A673 (cell line): ENCODE measurements at regions of chr18 and their contacts with region 1.

Region 1: GRCh38 chr18:8406186-8406867 is 202.9 kb upstream of the RAB12 start:
- DNase-seq: no peak
- H3K4me3 ChIP-seq: no peak overlapping the region
- H3K27ac ChIP-seq: no peak overlapping the region
- H3K4me1 ChIP-seq: no peaks in the 10 kb centered on the region
- H3K27me3 ChIP-seq: peaks cover 4% of the 10 kb centered on the region
- CTCF ChIP-seq: no peak

Region 2: DNA sequence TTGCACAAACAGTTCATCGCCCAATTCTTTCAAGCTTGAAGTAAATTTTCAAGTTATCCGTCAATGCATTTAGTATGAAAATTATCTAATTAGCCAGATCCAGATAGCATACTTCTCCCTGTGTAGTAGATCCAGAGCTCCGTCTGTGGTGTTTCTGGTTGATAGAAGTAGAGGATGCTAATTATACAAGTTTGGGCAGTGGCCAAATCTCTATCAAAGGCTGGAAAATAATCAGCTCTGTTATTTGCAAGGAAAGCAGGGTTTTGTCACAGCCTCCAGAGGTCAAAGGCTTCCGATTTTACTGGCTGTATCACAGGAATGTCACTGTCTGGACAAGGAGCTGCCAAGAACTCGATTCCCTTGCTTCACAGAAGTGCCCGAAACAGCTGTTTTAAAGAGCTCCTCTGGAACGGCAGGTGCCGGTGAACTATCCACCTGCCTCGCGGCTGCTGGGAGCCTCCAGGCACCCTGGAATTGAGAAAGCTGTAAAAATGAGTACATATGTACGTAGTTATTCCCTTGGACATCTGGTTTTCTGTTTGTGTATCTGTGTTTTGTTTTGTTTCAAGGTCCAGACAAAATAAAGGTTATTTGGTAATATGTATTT is 1146.7 kb before region 1 on chr18:
- CTCF ChIA-PET with region 1: no interaction called
- POLR2A ChIA-PET with region 1: no interaction called
- intact Hi-C with region 1: no loop called
- DNase-seq: no peak
- H3K4me3 ChIP-seq: no peak overlapping the region
- H3K27ac ChIP-seq: no peak overlapping the region
- H3K4me1 ChIP-seq: no peaks in the 10 kb centered on the region
- H3K27me3 ChIP-seq: no peaks in the 10 kb centered on the region
- CTCF ChIP-seq: no peak

Region 3: DNA sequence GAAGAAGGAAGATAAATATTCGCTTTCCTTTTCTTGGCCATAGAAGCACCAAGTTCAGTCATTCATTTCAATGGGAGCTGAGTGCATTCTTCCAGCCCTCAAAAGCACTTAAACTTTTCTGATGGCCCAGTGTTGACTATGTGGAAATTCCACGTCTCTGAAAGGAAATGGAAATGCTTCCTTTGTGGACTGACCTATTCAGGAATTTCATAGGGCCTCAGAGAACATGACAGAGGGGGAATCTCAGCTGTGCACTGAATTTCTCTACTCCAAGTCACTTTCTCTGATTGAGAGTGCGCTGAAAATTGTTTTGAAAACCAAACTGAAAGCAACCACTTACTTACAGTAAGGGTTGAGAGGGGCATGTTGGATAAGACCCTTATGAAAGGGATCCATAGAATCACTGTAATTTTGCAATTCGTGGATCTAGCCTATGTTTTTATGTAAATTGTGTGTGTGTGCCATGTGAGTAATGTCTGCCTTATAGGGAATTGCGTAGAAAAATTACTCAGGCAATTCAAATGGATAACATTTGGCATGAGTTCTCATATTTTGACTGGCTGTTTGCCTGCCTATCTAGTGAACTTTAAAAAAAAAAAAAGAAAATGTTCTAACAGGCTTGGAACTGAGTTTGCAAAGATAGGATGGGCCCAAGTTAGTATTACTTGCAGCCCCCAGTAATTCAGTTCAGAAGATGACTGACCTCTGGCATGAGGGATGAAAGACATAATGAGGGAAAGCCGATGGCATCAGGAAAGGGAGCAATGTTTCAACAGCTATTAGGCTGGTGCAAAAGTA is 402.2 kb before region 1 on chr18:
- CTCF ChIA-PET with region 1: no interaction called
- POLR2A ChIA-PET with region 1: no interaction called
- intact Hi-C with region 1: no loop called
- DNase-seq: no peak
- H3K4me3 ChIP-seq: no peak overlapping the region
- H3K27ac ChIP-seq: no peak overlapping the region
- H3K4me1 ChIP-seq: no peaks in the 10 kb centered on the region
- H3K27me3 ChIP-seq: no peaks in the 10 kb centered on the region
- CTCF ChIP-seq: no peak

Region 4: DNA sequence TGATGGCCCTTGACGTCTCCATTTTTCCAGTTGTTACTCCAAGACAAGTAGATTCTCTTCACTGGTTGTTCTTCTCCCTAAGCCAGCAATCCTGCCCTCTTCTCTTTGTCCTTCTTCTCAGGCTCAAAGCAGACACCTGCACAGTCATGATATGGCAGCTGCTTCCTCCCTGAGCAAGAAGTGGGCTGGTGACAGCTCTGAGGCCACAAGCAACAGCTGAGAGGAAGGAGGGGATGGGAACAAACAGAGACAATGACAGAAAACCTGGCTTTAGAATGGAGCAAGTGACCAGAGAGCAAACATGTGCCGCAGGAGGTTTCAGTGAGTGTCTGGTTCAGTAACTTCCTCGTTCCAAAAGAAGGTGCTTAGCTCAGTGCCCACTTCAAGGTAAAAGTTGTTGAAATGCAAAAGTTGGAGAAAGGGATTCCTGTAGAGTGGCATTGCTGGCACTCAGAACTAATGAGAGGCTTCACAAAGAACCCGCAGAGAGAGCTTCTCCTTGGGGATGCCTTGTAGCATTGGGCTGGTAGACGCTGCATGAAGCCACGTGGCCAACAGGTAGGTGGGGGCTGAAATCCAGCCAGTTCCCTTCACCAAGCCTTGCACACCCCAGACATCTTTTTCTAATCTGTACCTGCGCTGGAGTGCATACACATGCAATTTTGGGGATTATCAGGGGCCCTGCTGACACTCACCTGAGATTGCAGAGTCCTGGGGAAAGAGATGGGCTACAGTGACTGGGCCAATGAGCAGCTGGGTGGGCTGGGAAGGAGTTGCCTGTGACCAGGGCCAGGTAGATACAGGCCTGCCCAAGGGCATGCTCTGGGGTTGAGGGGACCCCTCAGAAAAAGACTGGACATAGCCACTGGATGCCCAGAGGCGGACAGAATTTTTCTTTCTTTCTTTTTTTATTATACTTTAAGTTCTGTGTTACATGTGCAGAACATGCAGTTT is 49.6 kb after region 1 on chr18:
- CTCF ChIA-PET with region 1: no interaction called
- POLR2A ChIA-PET with region 1: no interaction called
- intact Hi-C with region 1: loop called (anchors 5 kb)
- DNase-seq: no peak
- H3K4me3 ChIP-seq: no peak overlapping the region
- H3K27ac ChIP-seq: no peak overlapping the region
- H3K4me1 ChIP-seq: no peaks in the 10 kb centered on the region
- H3K27me3 ChIP-seq: no peaks in the 10 kb centered on the region
- CTCF ChIP-seq: no peak